ENCODE measurements at regions of chr12 and their contacts with region 1.

Region 1: DNA sequence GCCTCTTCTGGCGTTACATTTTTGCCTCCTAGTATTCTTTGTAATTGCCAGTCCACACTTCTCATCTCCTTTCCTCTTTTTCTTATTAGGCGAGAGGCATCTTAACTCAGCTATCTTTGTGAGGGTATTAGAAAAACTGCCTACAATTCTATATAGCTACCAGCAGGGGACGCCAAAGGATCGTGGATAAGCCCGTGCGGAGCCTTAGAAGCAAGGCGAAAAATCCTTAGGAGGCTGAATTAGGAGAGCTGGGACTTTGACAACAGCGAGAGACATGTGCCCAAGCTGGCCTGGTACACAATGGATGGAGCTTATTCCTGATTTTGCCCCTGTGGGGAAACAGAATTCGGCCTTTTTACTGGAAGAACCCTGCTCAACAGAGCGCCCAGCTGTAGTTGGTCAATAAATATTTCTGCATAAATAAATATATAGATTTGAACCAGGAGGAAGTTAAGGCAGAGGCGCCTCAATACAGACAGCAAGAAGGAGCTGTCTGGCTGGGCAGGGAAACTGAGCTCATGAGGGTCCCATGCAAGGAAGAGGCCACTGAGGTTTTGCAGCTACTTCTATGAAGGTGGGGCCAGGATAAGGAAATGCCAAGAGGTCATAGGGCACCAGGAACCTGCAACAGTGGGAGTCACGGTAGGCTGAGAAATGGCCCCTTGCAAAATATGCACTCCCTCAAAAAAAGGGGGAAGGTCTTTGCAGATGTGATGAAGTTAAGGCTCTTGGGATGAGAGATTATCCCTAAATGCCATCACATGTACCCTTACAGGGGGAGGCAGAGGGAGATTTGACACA is 14.6 kb upstream of the RBM19 start:
- DNase-seq: peak; percentile 25 to 58 (median 45)
- H3K4me3 ChIP-seq: no peak overlapping the region
- H3K4me3 Mint-ChIP-seq: no peak overlapping the region
- H3K27ac ChIP-seq: no peak overlapping the region
- H3K27ac Mint-ChIP-seq: peak overlapping the region in 1 of 7 donors; percentile 10
- H3K4me1 ChIP-seq: no peaks in the 10 kb centered on the region
- H3K4me1 Mint-ChIP-seq: no peaks in the 10 kb centered on the region
- H3K27me3 ChIP-seq: no peaks in the 10 kb centered on the region
- H3K27me3 Mint-ChIP-seq: peaks cover 5 to 12% (median 9%) of the 10 kb centered on the region in 3 donors
- CTCF ChIP-seq: peak; percentile 93

Region 2: GRCh38 chr12:113912760-113913329 is 67.9 kb before region 1 on chr12:
- intact Hi-C with region 1: no loop called
- DNase-seq: peak; percentile 11 to 47 (median 14)
- H3K4me3 ChIP-seq: no peak overlapping the region
- H3K4me3 Mint-ChIP-seq: no peak overlapping the region
- H3K27ac ChIP-seq: no peak overlapping the region
- H3K27ac Mint-ChIP-seq: no peak overlapping the region
- H3K4me1 ChIP-seq: no peaks in the 10 kb centered on the region
- H3K4me1 Mint-ChIP-seq: no peaks in the 10 kb centered on the region
- H3K27me3 ChIP-seq: no peaks in the 10 kb centered on the region
- H3K27me3 Mint-ChIP-seq: no peaks in the 10 kb centered on the region
- CTCF ChIP-seq: peak; percentile 85

Region 3: DNA sequence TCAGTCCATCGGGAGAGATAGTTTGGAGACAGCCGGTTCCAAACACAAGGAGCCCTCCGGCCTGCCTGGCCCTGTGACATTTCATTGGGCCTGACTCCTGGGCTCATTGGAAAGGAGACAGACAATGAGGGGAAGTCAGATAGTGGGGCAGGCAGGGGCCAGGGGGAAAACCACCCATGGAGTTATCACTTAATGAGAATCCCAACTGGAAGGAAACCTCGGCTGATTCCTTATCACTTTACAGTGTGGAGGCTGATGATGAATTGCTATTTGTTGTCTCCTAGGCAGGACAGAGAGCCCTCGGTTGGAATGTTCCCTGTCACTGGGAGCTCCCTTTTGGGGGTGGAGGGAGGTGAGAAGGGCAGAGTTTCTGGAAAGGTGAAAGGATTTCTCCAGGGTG is 380.8 kb after region 1 on chr12:
- intact Hi-C with region 1: no loop called
- DNase-seq: no peak
- H3K4me3 ChIP-seq: no peak overlapping the region
- H3K4me3 Mint-ChIP-seq: no peak overlapping the region
- H3K27ac ChIP-seq: no peak overlapping the region
- H3K27ac Mint-ChIP-seq: no peak overlapping the region
- H3K4me1 ChIP-seq: no peaks in the 10 kb centered on the region
- H3K4me1 Mint-ChIP-seq: no peaks in the 10 kb centered on the region
- H3K27me3 ChIP-seq: no peaks in the 10 kb centered on the region
- H3K27me3 Mint-ChIP-seq: peaks cover 0 to 2% (median 2%) of the 10 kb centered on the region in 3 donors
- CTCF ChIP-seq: no peak

Region 4: DNA sequence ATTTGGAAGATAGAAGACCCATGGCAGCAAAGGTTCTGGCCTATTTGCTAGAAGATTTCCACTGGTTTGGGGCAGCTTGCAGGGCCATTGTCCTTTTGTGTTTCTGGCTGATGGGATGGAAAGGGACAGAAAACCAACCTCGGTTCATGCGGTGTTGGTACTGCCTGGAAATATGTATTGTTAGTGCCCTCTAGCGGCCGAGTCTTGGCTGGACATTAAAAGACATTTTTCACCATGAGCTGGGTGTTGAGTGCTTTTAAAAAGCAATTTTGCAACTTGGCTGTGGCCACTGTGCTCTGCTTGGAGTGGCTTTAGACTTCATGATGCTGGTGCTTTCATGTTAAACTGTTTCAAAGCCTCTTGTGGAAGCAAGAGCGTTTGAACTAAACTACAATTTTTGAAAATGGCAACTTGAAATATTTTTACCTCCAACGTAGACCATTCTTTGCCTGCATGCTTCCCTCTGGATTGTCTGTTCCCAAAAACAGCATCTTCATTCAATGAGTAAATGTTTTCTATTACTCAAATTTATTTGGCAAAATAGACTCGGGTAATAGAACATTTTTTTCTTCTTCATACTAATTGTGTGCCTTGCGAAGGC is 527.9 kb after region 1 on chr12:
- intact Hi-C with region 1: loop called (anchors 2 to 5 kb)
- DNase-seq: peak; percentile 22 to 39 (median 36)
- H3K4me3 ChIP-seq: no peak overlapping the region
- H3K4me3 Mint-ChIP-seq: no peak overlapping the region
- H3K27ac ChIP-seq: no peak overlapping the region
- H3K27ac Mint-ChIP-seq: no peak overlapping the region
- H3K4me1 ChIP-seq: no peaks in the 10 kb centered on the region
- H3K4me1 Mint-ChIP-seq: no peaks in the 10 kb centered on the region
- H3K27me3 ChIP-seq: no peaks in the 10 kb centered on the region
- H3K27me3 Mint-ChIP-seq: peaks cover 0 to 9% (median 3%) of the 10 kb centered on the region in 3 donors
- CTCF ChIP-seq: peak; percentile 76

Region 5: GRCh38 chr12:115916910-115917668 is 1936.4 kb after region 1 on chr12:
- intact Hi-C with region 1: loop called in 1 of 2 experiments (anchors 2 kb)
- DNase-seq: peak; percentile 11 to 39 (median 22)
- H3K4me3 ChIP-seq: no peak overlapping the region
- H3K4me3 Mint-ChIP-seq: peak overlapping the region in 1 of 2 donors; percentile 62
- H3K27ac ChIP-seq: no peak overlapping the region
- H3K27ac Mint-ChIP-seq: no peak overlapping the region
- H3K4me1 ChIP-seq: no peaks in the 10 kb centered on the region
- H3K4me1 Mint-ChIP-seq: peaks cover 2% of the 10 kb centered on the region
- H3K27me3 ChIP-seq: peaks cover 14 to 39% of the 10 kb centered on the region in 2 donors
- H3K27me3 Mint-ChIP-seq: peaks cover 31 to 54% (median 32%) of the 10 kb centered on the region in 3 donors
- CTCF ChIP-seq: peak; percentile 99